PC-3 (cell line): ENCODE measurements at regions of chr1 and their contacts with region 1.

Region 1: DNA sequence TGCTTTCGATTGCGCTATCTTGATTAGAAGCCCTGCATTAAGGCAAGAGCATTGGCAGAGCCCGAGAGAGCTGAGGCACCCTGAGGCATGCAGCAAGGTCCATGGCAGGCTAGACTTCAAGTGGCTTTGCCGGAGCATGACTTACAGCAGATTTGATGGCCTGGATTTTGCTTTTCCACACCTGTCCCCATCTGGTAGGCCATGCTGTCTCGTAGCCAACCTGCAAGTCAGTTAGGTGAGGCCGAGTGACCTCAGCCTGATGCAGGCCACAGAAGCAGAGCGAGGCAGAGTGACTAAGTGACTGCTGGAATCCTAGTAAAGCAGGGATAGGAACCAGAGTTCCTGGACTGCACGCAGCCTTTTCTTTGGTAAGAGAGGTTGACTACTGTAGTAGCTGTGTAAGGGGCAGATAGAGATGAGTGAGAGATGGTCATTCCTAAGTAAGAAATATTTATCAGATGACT is 148.9 kb downstream of the PBX1 start:
- DNase-seq: peak; percentile 97
- ATAC-seq: peak; percentile 79
- H3K4me3 ChIP-seq: peak overlapping the region; percentile 8; the same call in 1 of the 2 replicates
- H3K27ac ChIP-seq: peak overlapping the region; percentile 95
- H3K4me1 ChIP-seq: peaks cover 47% of the 10 kb centered on the region
- H3K27me3 ChIP-seq: no peaks in the 10 kb centered on the region
- CTCF ChIP-seq: no peak

Region 2: GRCh38 chr1:164565357-164565756 is 142.5 kb before region 1 on chr1:
- CTCF ChIA-PET with region 1: no interaction called
- POLR2A ChIA-PET with region 1: no interaction called
- intact Hi-C with region 1: no loop called
- DNase-seq: no peak
- ATAC-seq: no peak
- H3K4me3 ChIP-seq: no peak overlapping the region
- H3K27ac ChIP-seq: no peak overlapping the region
- H3K4me1 ChIP-seq: peaks cover 5% of the 10 kb centered on the region
- H3K27me3 ChIP-seq: no peaks in the 10 kb centered on the region
- CTCF ChIP-seq: no peak

Region 3: DNA sequence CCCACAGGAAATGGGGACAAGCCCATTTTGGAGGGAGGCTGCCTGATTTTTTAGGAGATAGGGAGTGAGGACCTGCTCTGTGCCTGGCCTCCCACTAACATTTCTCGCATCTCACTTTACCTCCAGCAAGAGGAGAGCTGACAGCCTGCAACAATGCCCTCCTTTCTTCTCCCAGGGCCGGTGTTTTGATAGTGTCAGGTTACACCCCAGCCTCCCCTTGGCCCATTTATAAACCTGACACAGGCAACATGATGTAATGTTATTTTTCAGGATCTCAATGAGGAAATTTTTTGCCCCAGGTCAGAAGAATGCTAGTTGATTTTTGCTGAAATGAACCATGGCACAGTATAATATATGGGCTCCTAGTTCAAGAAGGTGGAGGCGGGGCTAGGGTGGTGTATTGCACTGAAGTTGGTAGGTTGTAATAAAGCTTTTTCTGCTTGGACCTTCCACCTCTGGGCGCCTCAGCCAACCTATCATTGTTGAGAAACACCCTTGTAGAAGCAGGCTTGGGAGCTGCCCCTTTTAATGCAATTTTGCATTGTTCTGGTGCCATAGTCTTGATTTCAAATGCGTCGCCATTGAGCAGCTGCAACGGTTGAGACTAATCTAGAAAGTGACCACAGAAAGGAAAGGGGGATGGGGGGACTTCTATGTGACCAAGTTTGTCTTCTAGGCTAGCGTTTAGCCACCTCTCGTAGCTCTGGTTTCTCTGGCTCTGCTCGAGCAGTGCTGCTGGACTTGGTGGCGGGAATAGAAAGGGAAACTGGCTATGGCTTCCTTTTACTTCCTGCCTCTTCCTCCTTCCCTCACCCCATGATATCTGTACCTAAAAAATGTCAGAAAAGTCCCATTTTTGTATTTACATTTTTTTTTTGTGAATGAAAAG is 95.9 kb before region 1 on chr1:
- CTCF ChIA-PET with region 1: no interaction called
- POLR2A ChIA-PET with region 1: no interaction called
- intact Hi-C with region 1: loop called (anchors 5 kb)
- DNase-seq: peak; percentile 93
- ATAC-seq: peak; percentile 94
- H3K4me3 ChIP-seq: peak overlapping the region; percentile 8; the same call in 1 of the 2 replicates
- H3K27ac ChIP-seq: peak overlapping the region; percentile 51
- H3K4me1 ChIP-seq: peaks cover 25% of the 10 kb centered on the region
- H3K27me3 ChIP-seq: no peaks in the 10 kb centered on the region
- CTCF ChIP-seq: no peak

Region 4: GRCh38 chr1:164644774-164645235 is 63.1 kb before region 1 on chr1:
- CTCF ChIA-PET with region 1: no interaction called
- POLR2A ChIA-PET with region 1: no interaction called
- intact Hi-C with region 1: loop called (anchors 5 kb)
- DNase-seq: peak; percentile 67
- ATAC-seq: peak; percentile 48; the same call in 1 of the 2 replicates
- H3K4me3 ChIP-seq: no peak overlapping the region
- H3K27ac ChIP-seq: no peak overlapping the region
- H3K4me1 ChIP-seq: peaks cover 32% of the 10 kb centered on the region
- H3K27me3 ChIP-seq: no peaks in the 10 kb centered on the region
- CTCF ChIP-seq: no peak

Region 5: GRCh38 chr1:164695956-164696665 is 11.8 kb before region 1 on chr1:
- CTCF ChIA-PET with region 1: no interaction called
- POLR2A ChIA-PET with region 1: no interaction called
- intact Hi-C with region 1: loop called (anchors 1 kb)
- DNase-seq: peak; percentile 78
- ATAC-seq: peak; percentile 97
- H3K4me3 ChIP-seq: no peak overlapping the region; the same call in 1 of the 2 replicates
- H3K27ac ChIP-seq: peak overlapping the region; percentile 26; the same call in 1 of the 2 replicates
- H3K4me1 ChIP-seq: peaks cover 13% of the 10 kb centered on the region
- H3K27me3 ChIP-seq: no peaks in the 10 kb centered on the region
- CTCF ChIP-seq: no peak